Testis (tissue), 5 donors: ENCODE measurements at regions of chr11 and their contacts with region 1.

Region 1: DNA sequence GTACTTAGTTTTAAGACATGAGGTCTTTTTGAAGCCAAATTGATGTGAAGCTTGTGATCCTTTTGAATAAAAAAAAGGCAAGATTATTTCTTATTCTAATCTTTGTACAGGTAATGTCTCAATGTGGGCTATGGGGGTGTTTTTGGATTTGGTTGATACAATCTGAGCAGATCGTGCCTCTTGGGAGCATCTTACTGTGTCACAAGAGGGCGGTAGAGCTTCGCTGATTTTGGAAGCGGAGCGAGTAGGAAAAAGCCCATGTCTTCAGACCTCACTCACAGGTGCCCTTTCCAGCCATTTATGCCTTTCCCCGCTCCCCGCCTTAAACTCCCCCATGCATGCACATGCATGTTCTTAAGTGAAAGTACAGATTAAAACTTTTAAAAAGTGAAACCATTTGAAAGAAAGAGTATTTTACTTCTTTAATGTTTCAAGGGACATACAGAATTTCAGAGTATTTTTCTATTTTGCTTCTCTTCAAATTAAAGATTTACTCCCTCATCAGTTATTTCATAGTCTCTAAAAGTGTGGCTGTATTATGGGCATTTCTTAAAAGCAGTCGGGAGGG is 18.8 kb downstream of the DDX25 start:
- DNase-seq: peak; percentile 78
- H3K4me3 ChIP-seq: no peak overlapping the region
- H3K27ac ChIP-seq: no peak overlapping the region
- H3K4me1 ChIP-seq: no peaks in the 10 kb centered on the region
- H3K27me3 ChIP-seq: no peaks in the 10 kb centered on the region
- CTCF ChIP-seq: peak; percentile 57 to 66 (median 60)
- POLR2A ChIP-seq: no peak

Region 2: GRCh38 chr11:125649465-125650166 is 273.5 kb before region 1 on chr11:
- intact Hi-C with region 1: no loop called
- DNase-seq: no peak
- H3K4me3 ChIP-seq: no peak overlapping the region
- H3K27ac ChIP-seq: no peak overlapping the region
- H3K4me1 ChIP-seq: no peaks in the 10 kb centered on the region
- H3K27me3 ChIP-seq: no peaks in the 10 kb centered on the region
- CTCF ChIP-seq: no peak
- POLR2A ChIP-seq: no peak

Region 3: DNA sequence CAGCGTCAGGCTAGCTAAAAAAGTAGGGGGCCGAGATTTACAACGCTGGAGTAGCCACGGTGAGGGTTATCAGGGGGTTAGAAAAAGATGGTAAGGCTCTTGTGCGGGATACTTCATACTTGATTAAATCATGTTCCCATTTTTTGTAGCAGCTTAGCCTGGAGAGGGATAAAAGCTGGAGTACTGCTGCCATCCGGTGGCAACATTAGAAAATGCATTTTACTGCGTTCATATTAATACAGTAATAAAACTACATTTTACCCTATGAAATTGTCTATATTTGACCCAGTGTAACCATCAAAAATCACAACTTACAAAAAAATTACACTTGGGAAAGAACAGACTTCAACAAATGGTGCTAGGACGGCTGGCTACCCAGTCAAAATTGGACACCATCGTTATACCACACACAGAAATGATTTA is 271.0 kb after region 1 on chr11:
- intact Hi-C with region 1: loop called (anchors 5 kb)
- DNase-seq: peak; percentile 58
- H3K4me3 ChIP-seq: no peak overlapping the region
- H3K27ac ChIP-seq: no peak overlapping the region
- H3K4me1 ChIP-seq: no peaks in the 10 kb centered on the region
- H3K27me3 ChIP-seq: no peaks in the 10 kb centered on the region
- CTCF ChIP-seq: peak; percentile 70 to 89 (median 83)
- POLR2A ChIP-seq: no peak